A673 (cell line): ENCODE measurements at regions of chr7 and their contacts with region 1.

Region 1: GRCh38 chr7:22001345-22002004 is 55.8 kb upstream of the CDCA7L start:
- DNase-seq: peak; percentile 77
- H3K4me3 ChIP-seq: no peak overlapping the region
- H3K27ac ChIP-seq: no peak overlapping the region
- H3K4me1 ChIP-seq: peaks cover 4% of the 10 kb centered on the region
- H3K27me3 ChIP-seq: peaks cover 14% of the 10 kb centered on the region
- CTCF ChIP-seq: peak; percentile 85

Region 2: DNA sequence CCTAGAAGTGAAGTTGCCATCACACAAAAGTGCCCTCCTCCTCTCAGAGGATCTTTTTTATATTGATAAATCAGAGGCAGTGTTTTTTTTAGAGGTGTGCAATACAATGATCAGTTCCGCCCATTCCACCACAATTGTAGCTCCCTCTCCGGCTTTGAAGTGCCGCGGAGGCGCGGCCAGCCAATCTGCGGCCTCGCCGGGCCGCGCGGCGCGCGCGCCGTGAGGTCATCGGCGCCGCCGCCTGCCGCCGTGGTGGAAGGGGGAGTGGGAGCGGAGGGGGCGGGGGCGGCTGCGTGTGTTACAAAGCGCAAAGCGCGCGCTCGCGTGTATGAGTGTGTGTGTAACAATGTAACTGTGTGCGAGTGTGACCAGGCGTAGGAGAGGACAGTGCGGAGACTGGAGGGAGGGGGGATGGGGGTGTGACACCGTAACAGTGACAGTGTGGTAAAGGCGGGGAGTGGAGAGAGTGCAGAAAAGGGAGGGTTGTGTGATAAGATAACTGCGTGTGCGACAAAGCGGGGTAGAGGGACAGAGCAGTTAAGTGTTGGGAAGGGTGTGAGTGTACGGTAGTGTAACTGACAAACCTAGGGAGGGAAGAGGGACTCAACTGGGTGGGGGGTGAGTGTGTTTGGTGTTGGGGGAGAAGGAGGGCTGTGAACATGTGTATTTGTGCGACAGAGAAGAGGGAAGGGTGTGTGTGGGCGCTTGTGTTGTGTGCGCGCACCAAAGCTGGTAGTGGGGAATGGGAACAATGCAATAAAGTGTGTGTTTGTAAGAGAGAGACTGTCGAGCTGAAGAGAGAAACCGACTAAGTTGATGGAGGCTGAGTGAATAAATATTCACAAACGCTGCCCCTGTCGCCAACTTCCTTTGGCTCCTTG is 1214.5 kb before region 1 on chr7 and contains the start of gene SP8:
- CTCF ChIA-PET with region 1: no interaction called
- POLR2A ChIA-PET with region 1: no interaction called
- intact Hi-C with region 1: loop called (anchors 10 kb)
- DNase-seq: peak; percentile 58
- H3K4me3 ChIP-seq: peak within 1 kb of the TSS; percentile 37
- H3K27ac ChIP-seq: no peak within 1 kb of the TSS
- H3K4me1 ChIP-seq: peaks cover 5% of the 10 kb centered on the region
- H3K27me3 ChIP-seq: peaks cover 100% of the 10 kb centered on the region
- CTCF ChIP-seq: no peak
- total RNA-seq, gene SP8: not detected in 2 replicates

Region 3: GRCh38 chr7:21507626-21508343 is 493.7 kb before region 1 on chr7:
- CTCF ChIA-PET with region 1: no interaction called
- POLR2A ChIA-PET with region 1: no interaction called
- intact Hi-C with region 1: no loop called
- DNase-seq: peak; percentile 65
- H3K4me3 ChIP-seq: no peak overlapping the region
- H3K27ac ChIP-seq: no peak overlapping the region
- H3K4me1 ChIP-seq: no peaks in the 10 kb centered on the region
- H3K27me3 ChIP-seq: no peaks in the 10 kb centered on the region
- CTCF ChIP-seq: peak; percentile 71

Region 4: DNA sequence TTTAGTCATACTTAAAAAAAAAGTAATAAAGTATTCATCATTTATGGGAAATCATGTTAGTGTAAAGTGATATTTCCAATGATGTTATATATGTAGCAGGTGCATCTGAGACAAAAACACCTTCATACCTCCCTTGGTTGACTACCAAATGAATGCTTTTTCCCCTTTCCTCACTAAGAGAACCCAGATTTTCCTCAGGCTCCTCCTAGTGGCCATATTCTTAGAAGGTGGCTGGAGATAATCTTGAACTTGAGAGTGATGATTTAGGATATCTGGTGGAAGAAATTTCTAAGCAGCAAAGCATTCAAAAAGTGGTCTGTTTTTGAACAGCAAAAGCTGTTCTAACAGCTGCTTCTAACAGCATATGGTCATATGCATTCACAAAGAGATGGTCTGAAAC is 475.5 kb before region 1 on chr7:
- CTCF ChIA-PET with region 1: no interaction called
- POLR2A ChIA-PET with region 1: no interaction called
- intact Hi-C with region 1: loop called (anchors 5 kb)
- DNase-seq: peak; percentile 29
- H3K4me3 ChIP-seq: no peak overlapping the region
- H3K27ac ChIP-seq: no peak overlapping the region
- H3K4me1 ChIP-seq: no peaks in the 10 kb centered on the region
- H3K27me3 ChIP-seq: peaks cover 3% of the 10 kb centered on the region
- CTCF ChIP-seq: peak; percentile 60

Region 5: GRCh38 chr7:21767300-21767900 is 234.1 kb before region 1 on chr7:
- CTCF ChIA-PET with region 1: no interaction called
- POLR2A ChIA-PET with region 1: no interaction called
- intact Hi-C with region 1: loop called (anchors 5 kb)
- DNase-seq: peak; percentile 77
- H3K4me3 ChIP-seq: no peak overlapping the region
- H3K27ac ChIP-seq: no peak overlapping the region
- H3K4me1 ChIP-seq: peaks cover 8% of the 10 kb centered on the region
- H3K27me3 ChIP-seq: peaks cover 95% of the 10 kb centered on the region
- CTCF ChIP-seq: peak; percentile 71

Region 6: DNA sequence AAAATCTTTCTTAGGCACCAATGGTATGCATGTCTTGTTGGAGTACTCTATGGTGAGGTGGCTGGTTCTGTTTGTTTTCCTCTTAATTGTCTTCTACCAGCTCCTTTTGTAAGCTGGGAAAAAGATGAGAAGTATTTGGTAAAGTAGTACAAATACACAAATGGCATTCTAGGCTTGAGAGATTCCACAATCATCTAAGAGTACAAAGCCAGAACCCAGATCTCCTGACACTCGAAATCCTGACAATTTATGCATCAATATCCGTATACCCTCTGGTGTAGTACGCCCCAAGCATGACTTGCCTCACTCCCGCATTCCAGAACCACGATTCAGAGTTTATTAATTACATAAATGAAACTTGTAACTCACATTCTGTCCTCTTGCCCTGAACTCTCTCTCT is 99.2 kb before region 1 on chr7:
- CTCF ChIA-PET with region 1: no interaction called
- POLR2A ChIA-PET with region 1: no interaction called
- intact Hi-C with region 1: no loop called
- DNase-seq: no peak
- H3K4me3 ChIP-seq: no peak overlapping the region
- H3K27ac ChIP-seq: no peak overlapping the region
- H3K4me1 ChIP-seq: peaks cover 6% of the 10 kb centered on the region
- H3K27me3 ChIP-seq: no peaks in the 10 kb centered on the region
- CTCF ChIP-seq: no peak

Region 7: GRCh38 chr7:22452142-22452959 is 450.9 kb after region 1 on chr7:
- CTCF ChIA-PET with region 1: interaction called, 15 read pairs
- POLR2A ChIA-PET with region 1: no interaction called
- intact Hi-C with region 1: no loop called
- DNase-seq: peak; percentile 71
- H3K4me3 ChIP-seq: peak overlapping the region; percentile 17
- H3K27ac ChIP-seq: no peak overlapping the region
- H3K4me1 ChIP-seq: no peaks in the 10 kb centered on the region
- H3K27me3 ChIP-seq: no peaks in the 10 kb centered on the region
- CTCF ChIP-seq: peak; percentile 88